ENCODE measurements at regions of chr12 and their contacts with region 1.

Region 1: GRCh38 chr12:55955800-55956508 is 9.9 kb downstream of the PMEL start:
- DNase-seq: peak; percentile 42 to 67 (median 65)
- H3K4me3 ChIP-seq: no peak overlapping the region
- H3K27ac ChIP-seq: no peak overlapping the region
- H3K4me1 ChIP-seq: no peaks in the 10 kb centered on the region
- H3K27me3 ChIP-seq: no peaks in the 10 kb centered on the region

Region 2: GRCh38 chr12:55112378-55112777 is 843.6 kb before region 1 on chr12:
- CTCF ChIA-PET with region 1: no interaction called
- POLR2A ChIA-PET with region 1: no interaction called
- DNase-seq: no peak
- H3K4me3 ChIP-seq: no peak overlapping the region
- H3K27ac ChIP-seq: no peak overlapping the region
- H3K4me1 ChIP-seq: no peaks in the 10 kb centered on the region
- H3K27me3 ChIP-seq: peaks cover 0 to 2% (median 0%) of the 10 kb centered on the region in 5 experiments

Region 3: DNA sequence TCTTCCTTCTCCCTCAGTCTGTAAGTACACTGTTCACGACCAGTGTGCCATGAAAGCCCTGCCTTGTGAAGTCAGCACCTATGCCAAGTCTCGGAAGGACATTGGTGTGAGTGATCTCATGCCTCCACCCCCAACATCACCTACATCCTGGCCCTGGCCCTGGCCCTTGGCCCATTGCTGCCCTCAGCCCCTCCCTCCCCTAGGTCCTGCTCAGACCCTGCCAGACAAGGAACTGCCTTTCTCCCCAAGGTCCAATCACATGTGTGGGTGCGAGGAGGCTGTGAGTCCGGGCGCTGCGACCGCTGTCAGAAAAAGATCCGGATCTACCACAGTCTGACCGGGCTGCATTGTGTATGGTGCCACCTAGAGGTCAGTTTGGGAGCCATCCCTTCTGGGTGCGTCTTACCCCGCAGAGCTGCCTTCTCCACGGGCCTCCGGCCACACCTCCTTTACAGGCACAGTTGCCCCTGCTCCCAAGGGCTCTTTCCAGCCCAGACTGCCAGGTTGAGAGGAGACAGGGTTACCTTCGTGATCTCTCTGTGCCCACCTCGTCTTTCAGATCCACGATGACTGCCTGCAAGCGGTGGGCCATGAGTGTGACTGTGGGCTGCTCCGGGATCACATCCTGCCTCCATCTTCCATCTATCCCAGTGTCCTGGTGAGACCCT is 15.8 kb before region 1 on chr12:
- CTCF ChIA-PET with region 1: interaction called, 37 read pairs
- POLR2A ChIA-PET with region 1: no interaction called
- DNase-seq: peak; percentile 81 to 87 (median 82)
- H3K4me3 ChIP-seq: peak overlapping the region in 1 of 7 experiments; percentile 6
- H3K27ac ChIP-seq: no peak overlapping the region
- H3K4me1 ChIP-seq: peaks cover 0 to 8% (median 6%) of the 10 kb centered on the region in 4 experiments
- H3K27me3 ChIP-seq: no peaks in the 10 kb centered on the region

Region 4: GRCh38 chr12:55973598-55974307 is 17.8 kb after region 1 on chr12 and contains the start of gene RAB5B:
- CTCF ChIA-PET with region 1: interaction called, 18 read pairs
- POLR2A ChIA-PET with region 1: no interaction called
- DNase-seq: peak; percentile 100
- H3K4me3 ChIP-seq: peak within 1 kb of the TSS; percentile 89 to 100 (median 94)
- H3K27ac ChIP-seq: peak within 1 kb of the TSS; percentile 79 to 93
- H3K4me1 ChIP-seq: peaks cover 14 to 35% (median 20%) of the 10 kb centered on the region in 4 experiments
- H3K27me3 ChIP-seq: no peaks in the 10 kb centered on the region

Region 5: GRCh38 chr12:55982319-55982936 is 26.5 kb after region 1 on chr12:
- CTCF ChIA-PET with region 1: interaction called, 14 read pairs
- POLR2A ChIA-PET with region 1: no interaction called
- DNase-seq: peak in 2 of 3 donors; percentile 16
- H3K4me3 ChIP-seq: no peak overlapping the region
- H3K27ac ChIP-seq: no peak overlapping the region
- H3K4me1 ChIP-seq: peaks cover 2 to 29% (median 5%) of the 10 kb centered on the region in 4 experiments
- H3K27me3 ChIP-seq: no peaks in the 10 kb centered on the region

Measured in common myeloid progenitor, CD34-positive (primary cell).